Left lung (tissue), 14 donors: ENCODE measurements at regions of chr2 and their contacts with region 1.

Region 1: GRCh38 chr2:72150157-72150865 is 2.6 kb upstream of the CYP26B1 start:
- DNase-seq: peak in 2 of 4 donors; percentile 86
- ATAC-seq: peak; percentile 95
- H3K4me3 ChIP-seq: peak overlapping the region in 1 of 2 donors; percentile 39
- H3K27ac ChIP-seq: no peak overlapping the region
- H3K4me1 ChIP-seq: peaks cover 19 to 45% of the 10 kb centered on the region in 2 donors
- H3K27me3 ChIP-seq: peaks cover 41 to 91% of the 10 kb centered on the region in 2 donors
- CTCF ChIP-seq: peak; percentile 80 to 84

Region 2: DNA sequence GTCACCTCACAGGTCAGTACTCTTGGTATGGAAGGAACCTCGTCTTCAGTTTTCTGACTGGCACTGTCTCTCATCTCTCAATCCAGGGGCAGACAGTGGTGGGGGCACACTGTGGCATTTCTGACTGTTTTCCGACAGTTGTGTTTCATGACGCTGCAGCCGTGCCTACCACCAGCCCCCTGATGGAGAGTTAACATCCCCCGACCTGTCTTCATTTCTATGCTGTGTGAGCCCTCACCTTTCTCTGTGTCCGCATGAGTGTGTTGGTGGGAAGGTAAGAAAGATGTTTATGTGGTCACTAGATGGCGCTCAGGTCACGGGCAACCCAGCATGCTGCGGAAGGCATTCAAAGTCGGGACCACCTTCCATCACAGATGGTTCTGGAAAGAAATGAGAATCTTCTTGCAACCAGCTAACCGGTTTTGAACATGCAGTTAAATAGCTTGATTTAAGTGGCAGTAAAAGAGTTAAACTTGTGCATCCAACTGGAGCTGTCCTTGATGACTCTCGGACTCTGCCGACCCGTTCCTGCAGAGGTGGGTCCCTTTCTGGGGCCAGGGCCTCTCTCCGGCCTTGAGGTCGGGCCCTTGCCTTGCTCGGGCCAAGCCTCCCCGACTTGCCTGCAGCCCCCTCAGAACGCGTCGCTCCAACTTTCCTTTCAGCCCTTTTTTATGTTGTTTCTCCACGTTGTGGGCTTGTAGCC is 604.6 kb before region 1 on chr2:
- intact Hi-C with region 1: loop called in 1 of 2 experiments (anchors 5 kb)
- DNase-seq: peak in 2 of 4 donors; percentile 66 to 84
- ATAC-seq: peak; percentile 82
- H3K4me3 ChIP-seq: peak overlapping the region in 1 of 2 donors; percentile 16
- H3K27ac ChIP-seq: peak overlapping the region; percentile 1 to 71
- H3K4me1 ChIP-seq: peaks cover 0 to 20% of the 10 kb centered on the region in 2 donors
- H3K27me3 ChIP-seq: peaks cover 0 to 10% of the 10 kb centered on the region in 2 donors
- CTCF ChIP-seq: peak; percentile 20 to 59

Region 3: DNA sequence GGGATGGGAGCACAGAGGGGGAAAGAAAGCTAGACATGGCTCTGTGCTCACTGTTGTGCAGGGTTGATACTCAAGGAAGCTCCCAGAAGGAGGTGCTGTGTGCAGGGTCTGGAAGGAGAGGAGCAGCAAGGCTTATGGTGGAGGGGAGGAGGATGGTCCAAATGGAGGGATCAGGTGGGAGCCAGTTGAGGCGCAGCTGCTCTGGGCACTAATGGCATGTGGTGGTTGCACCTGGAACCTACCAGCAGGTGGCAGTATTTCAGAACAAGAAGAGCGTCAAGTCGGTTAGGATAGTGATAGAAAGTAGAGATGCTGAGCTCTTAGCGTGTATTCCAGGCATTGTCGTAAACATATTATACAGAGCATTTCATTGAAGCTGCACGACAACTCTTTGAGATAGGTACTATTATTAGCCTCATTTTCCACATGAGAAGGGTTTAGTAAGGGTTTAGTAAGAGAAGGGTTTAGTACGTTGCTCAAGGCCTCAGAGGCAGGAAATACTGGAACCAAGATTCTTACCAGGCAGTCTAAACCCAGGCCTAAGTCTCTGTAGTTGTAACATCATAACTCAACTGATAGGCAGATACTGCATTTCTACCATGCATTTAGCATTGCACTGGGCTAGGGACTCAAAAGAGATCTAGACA is 226.3 kb before region 1 on chr2:
- intact Hi-C with region 1: loop called in 1 of 2 experiments (anchors 5 kb)
- DNase-seq: peak in 2 of 4 donors; percentile 43 to 69
- ATAC-seq: peak; percentile 80
- H3K4me3 ChIP-seq: no peak overlapping the region
- H3K27ac ChIP-seq: no peak overlapping the region
- H3K4me1 ChIP-seq: no peaks in the 10 kb centered on the region
- H3K27me3 ChIP-seq: no peaks in the 10 kb centered on the region
- CTCF ChIP-seq: peak; percentile 67 to 87

Region 4: DNA sequence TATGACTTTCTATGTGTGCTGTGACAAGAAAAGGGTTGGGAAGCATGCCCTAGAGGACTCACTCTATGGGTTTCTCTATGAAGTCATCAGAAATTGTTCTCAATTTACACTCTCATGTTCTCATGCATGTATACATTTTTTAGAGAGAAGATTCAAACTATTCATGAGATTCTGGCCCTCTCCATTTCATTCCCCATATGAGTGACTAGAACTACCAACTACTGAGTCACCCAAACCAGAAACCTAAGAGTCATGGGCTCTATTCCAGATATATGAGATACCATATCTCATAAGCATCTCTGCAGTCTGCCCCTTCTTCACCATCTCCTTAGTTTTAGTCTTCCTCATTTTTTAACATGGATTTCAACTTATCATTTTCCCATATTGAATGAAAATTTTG is 587.8 kb after region 1 on chr2:
- intact Hi-C with region 1: no loop called
- DNase-seq: no peak
- ATAC-seq: no peak
- H3K4me3 ChIP-seq: no peak overlapping the region
- H3K27ac ChIP-seq: no peak overlapping the region
- H3K4me1 ChIP-seq: no peaks in the 10 kb centered on the region
- H3K27me3 ChIP-seq: no peaks in the 10 kb centered on the region
- CTCF ChIP-seq: no peak